Endothelial cell of umbilical vein (primary cell): ENCODE measurements at regions of chr20 and their contacts with region 1.

Region 1: GRCh38 chr20:49915378-49916145 is at the start of gene SPATA2:
- DNase-seq: peak; percentile 94
- H3K4me3 ChIP-seq: peak within 1 kb of the TSS; percentile 54 to 89 (median 68)
- H3K27ac ChIP-seq: peak within 1 kb of the TSS; percentile 86
- H3K4me1 ChIP-seq: peaks cover 17% of the 10 kb centered on the region
- H3K27me3 ChIP-seq: no peaks in the 10 kb centered on the region
- CTCF ChIP-seq: no peak
- POLR2A ChIP-seq: peak; percentile 83
- total RNA-seq, gene SPATA2: 6.1 TPM in 2 replicates

Region 2: GRCh38 chr20:49768204-49769047 is 147.1 kb before region 1 on chr20:
- CTCF ChIA-PET with region 1: no interaction called
- POLR2A ChIA-PET with region 1: no interaction called
- dilution Hi-C with region 1: no loop called
- intact Hi-C with region 1: no loop called
- DNase-seq: peak; percentile 92
- H3K4me3 ChIP-seq: no peak overlapping the region
- H3K27ac ChIP-seq: peak overlapping the region; percentile 39
- H3K4me1 ChIP-seq: peaks cover 23% of the 10 kb centered on the region
- H3K27me3 ChIP-seq: no peaks in the 10 kb centered on the region
- CTCF ChIP-seq: no peak
- POLR2A ChIP-seq: no peak

Region 3: GRCh38 chr20:49871391-49871948 is 44.1 kb before region 1 on chr20:
- CTCF ChIA-PET with region 1: no interaction called
- POLR2A ChIA-PET with region 1: no interaction called
- dilution Hi-C with region 1: no loop called
- intact Hi-C with region 1: no loop called
- DNase-seq: no peak
- H3K4me3 ChIP-seq: no peak overlapping the region
- H3K27ac ChIP-seq: no peak overlapping the region
- H3K4me1 ChIP-seq: no peaks in the 10 kb centered on the region
- H3K27me3 ChIP-seq: no peaks in the 10 kb centered on the region
- CTCF ChIP-seq: no peak
- POLR2A ChIP-seq: no peak

Region 4: DNA sequence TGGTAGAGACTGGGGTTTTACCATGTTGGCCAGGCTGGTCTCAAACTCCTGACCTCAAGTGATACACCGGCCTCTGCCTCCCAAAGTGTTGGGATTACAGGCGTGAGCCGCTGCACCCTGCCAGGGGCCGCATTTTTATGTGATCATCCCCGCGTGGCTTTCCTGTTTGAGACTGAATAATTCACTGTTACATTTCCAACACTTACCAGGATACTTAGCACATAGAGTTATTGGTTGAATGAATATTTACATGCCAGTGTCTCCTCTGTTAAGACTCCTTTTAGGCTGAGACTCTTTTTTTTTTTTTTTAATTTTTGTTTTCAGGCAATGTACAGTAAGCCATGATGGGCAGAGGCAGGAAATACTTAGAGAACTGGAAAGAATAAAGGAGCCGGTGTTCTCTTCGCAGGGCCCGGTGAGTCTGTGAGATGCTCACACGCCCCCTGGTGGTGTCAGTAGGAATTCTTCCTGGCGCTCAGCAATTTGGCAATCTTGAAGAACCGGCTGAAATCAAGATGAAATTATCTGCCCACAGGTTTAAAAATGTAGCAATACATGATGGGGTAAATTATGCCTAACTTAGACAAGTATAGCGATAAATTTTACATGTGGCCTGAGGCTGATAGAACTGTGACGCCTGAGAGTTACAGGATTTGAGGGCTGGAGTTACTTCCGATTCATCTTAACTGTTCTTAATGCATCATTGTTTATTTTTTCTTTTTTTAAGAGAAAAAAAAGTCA is 13.0 kb after region 1 on chr20:
- CTCF ChIA-PET with region 1: interaction called, 7 read pairs
- POLR2A ChIA-PET with region 1: no interaction called
- dilution Hi-C with region 1: no loop called
- intact Hi-C with region 1: loop called (anchors 2 kb)
- DNase-seq: peak; percentile 87
- H3K4me3 ChIP-seq: no peak overlapping the region
- H3K27ac ChIP-seq: no peak overlapping the region
- H3K4me1 ChIP-seq: peaks cover 3% of the 10 kb centered on the region
- H3K27me3 ChIP-seq: no peaks in the 10 kb centered on the region
- CTCF ChIP-seq: peak; percentile 84 to 93
- POLR2A ChIP-seq: no peak

Region 5: DNA sequence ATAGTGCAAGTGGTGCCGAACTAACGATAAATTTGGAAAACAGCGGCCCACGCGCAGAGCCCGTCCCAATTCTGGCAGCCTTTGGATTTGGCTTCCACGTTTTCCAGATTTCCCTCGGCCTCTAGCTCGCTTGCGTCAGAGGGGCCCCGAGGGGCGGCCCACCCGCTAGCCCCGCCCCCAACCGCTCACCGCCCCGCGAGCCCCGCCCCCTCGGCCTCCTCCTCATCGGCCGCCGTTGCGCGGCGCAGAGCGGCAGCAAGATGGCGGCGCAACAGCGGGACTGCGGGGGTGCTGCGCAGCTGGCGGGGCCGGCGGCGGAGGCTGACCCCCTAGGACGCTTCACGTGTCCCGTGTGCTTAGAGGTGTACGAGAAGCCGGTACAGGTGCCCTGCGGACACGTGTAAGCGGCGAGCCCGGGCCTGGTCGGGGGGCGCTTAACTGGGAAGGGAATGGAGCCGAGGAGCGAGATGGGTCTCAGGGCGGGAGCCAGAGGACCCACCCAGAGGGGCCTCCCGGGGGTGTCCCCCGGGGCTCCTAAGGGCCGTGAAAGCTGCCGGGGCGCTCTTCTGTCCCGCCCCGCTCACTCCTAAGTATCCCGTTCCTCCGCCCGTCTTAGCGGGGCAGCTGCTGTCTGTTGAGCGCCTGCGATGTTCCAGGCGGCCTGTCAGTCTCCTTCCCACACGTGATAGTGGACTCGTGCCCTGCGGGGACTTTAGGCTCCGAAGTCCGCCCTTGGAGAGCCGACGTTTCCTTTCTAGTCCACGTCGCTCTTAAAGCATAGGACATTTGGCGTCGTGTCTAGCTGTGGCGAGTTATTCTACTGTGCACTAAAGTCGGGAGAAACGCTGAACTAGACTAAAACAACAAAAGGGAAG is 20.8 kb after region 1 on chr20 and contains the start of gene RNF114:
- CTCF ChIA-PET with region 1: interaction called, 4 read pairs
- POLR2A ChIA-PET with region 1: interaction called, 3 read pairs
- dilution Hi-C with region 1: no loop called
- intact Hi-C with region 1: loop called (anchors 2 kb)
- DNase-seq: peak; percentile 83
- H3K4me3 ChIP-seq: peak within 1 kb of the TSS; percentile 44 to 99 (median 82)
- H3K27ac ChIP-seq: peak within 1 kb of the TSS; percentile 29
- H3K4me1 ChIP-seq: peaks cover 20% of the 10 kb centered on the region
- H3K27me3 ChIP-seq: no peaks in the 10 kb centered on the region
- CTCF ChIP-seq: no peak
- POLR2A ChIP-seq: peak; percentile 92
- total RNA-seq, gene RNF114: 41.6 and 45.8 TPM in 2 replicates